ENCODE measurements at regions of chr5 and their contacts with region 1.

Region 1: GRCh38 chr5:52787600-52788504 is at the starts of genes ITGA1 and PELO:
- DNase-seq: peak; percentile 62
- ATAC-seq: peak; percentile 68
- H3K4me3 ChIP-seq: peak within 1 kb of the TSS; percentile 77
- H3K27ac ChIP-seq: peak within 1 kb of the TSS; percentile 85
- H3K4me1 ChIP-seq: peaks cover 48% of the 10 kb centered on the region
- H3K27me3 ChIP-seq: no peaks in the 10 kb centered on the region
- CTCF ChIP-seq: peak; percentile 39; the same call in 1 of the 2 replicates
- total RNA-seq, gene ITGA1: 3.4 and 4.7 TPM in 2 replicates
- total RNA-seq, gene PELO: 33.6 and 45.3 TPM in 2 replicates

Region 2: DNA sequence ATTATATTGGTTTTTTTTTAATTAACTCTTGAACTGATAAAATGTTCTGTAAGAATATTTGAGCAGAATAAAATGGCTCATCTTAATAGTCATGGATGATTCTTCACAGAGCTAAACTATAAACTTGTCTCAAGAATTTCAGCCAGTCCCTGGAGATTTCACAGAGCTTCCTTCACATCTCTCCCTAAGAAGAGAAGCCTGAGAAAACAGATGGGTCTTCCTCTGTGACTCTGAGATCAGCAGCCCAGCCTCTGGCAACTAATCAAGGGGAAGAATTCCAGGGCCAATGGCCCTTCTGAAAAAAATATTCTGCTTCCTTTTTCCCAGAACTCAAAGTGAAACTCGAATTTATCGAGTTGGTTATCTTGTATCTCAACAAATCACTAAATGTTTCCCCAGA is 122.3 kb before region 1 on chr5:
- CTCF ChIA-PET with region 1: interaction called, 6 read pairs
- POLR2A ChIA-PET with region 1: no interaction called
- intact Hi-C with region 1: loop called (anchors 10 kb)
- DNase-seq: no peak
- ATAC-seq: no peak
- H3K4me3 ChIP-seq: no peak overlapping the region
- H3K27ac ChIP-seq: no peak overlapping the region
- H3K4me1 ChIP-seq: no peaks in the 10 kb centered on the region
- H3K27me3 ChIP-seq: peaks cover 25% of the 10 kb centered on the region
- CTCF ChIP-seq: no peak

Region 3: GRCh38 chr5:52709171-52709925 is 78.5 kb before region 1 on chr5:
- CTCF ChIA-PET with region 1: no interaction called
- POLR2A ChIA-PET with region 1: no interaction called
- intact Hi-C with region 1: loop called (anchors 5 kb)
- DNase-seq: peak; percentile 50
- ATAC-seq: peak; percentile 70
- H3K4me3 ChIP-seq: no peak overlapping the region
- H3K27ac ChIP-seq: peak overlapping the region; percentile 57
- H3K4me1 ChIP-seq: 0 out of 2 replicates have a peak, but pooled peaks cover 9% of the 10 kb centered on the region
- H3K27me3 ChIP-seq: no peaks in the 10 kb centered on the region
- CTCF ChIP-seq: no peak

Region 4: GRCh38 chr5:52757991-52758390 is 29.9 kb before region 1 on chr5:
- CTCF ChIA-PET with region 1: no interaction called
- POLR2A ChIA-PET with region 1: no interaction called
- intact Hi-C with region 1: no loop called
- DNase-seq: peak; percentile 78
- ATAC-seq: peak; percentile 93
- H3K4me3 ChIP-seq: no peak overlapping the region
- H3K27ac ChIP-seq: peak overlapping the region; percentile 99
- H3K4me1 ChIP-seq: peaks cover 20% of the 10 kb centered on the region
- H3K27me3 ChIP-seq: no peaks in the 10 kb centered on the region
- CTCF ChIP-seq: no peak

Region 5: DNA sequence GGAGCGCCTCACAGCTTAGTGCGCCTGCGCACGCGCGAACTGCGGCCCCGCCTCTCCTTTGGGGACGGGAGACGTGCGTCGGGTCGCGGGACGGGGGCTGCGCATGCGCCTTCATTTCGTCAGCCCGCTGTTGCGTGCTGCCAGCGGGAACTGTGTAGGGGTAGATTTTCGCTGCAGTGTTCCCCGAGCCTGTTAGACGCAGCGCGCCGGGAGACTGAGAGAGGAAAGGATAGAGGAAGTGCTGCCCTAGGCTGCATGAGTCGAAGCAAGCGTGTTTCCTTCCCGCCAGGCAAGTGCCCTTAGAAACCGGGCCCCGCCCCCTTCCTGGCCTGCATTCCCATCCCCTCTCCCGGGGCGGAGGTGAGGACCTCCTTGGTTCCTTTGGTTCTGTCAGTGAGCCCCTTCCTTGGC is 12.1 kb after region 1 on chr5:
- CTCF ChIA-PET with region 1: no interaction called
- POLR2A ChIA-PET with region 1: interaction called, 3 read pairs
- intact Hi-C with region 1: loop called (anchors 1 kb)
- DNase-seq: peak; percentile 94
- ATAC-seq: peak; percentile 70
- H3K4me3 ChIP-seq: peak overlapping the region; percentile 77
- H3K27ac ChIP-seq: peak overlapping the region; percentile 99
- H3K4me1 ChIP-seq: peaks cover 25% of the 10 kb centered on the region
- H3K27me3 ChIP-seq: no peaks in the 10 kb centered on the region
- CTCF ChIP-seq: no peak

Region 6: DNA sequence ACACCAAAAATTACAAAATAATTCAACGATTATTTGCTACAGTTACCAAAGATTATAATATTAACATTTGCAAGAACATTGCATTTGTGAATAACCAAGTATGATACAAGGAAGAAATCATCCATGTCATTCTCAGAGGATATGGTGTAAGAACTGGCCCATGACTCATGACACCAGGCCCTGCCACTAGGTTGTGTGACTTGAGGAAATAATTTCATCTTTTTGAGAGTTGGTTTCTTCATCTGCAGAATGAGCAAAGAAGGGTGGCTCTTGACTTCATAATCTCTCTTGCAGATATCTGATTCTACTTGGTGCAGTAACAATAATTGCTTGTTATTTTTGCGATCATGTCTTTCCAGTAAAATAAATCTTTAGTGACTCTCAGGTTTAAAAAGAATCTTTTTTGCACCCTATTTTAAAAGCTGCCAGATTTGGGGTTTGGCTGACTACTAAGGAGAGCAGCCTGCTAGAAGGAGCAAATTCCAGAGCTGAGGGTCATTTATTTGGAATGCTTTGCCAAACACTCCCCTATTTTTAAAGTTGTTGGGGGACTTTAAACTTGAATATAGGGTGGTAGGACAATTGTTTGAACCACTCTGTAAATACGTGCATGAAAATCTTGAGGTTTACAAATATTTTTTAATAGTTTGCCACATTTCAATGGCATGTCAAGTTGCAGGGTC is 23.4 kb after region 1 on chr5:
- CTCF ChIA-PET with region 1: no interaction called
- POLR2A ChIA-PET with region 1: no interaction called
- intact Hi-C with region 1: no loop called
- DNase-seq: peak; percentile 49
- ATAC-seq: peak; percentile 28; the same call in 1 of the 2 replicates
- H3K4me3 ChIP-seq: no peak overlapping the region
- H3K27ac ChIP-seq: no peak overlapping the region
- H3K4me1 ChIP-seq: peaks cover 28% of the 10 kb centered on the region
- H3K27me3 ChIP-seq: no peaks in the 10 kb centered on the region
- CTCF ChIP-seq: no peak

Region 7: DNA sequence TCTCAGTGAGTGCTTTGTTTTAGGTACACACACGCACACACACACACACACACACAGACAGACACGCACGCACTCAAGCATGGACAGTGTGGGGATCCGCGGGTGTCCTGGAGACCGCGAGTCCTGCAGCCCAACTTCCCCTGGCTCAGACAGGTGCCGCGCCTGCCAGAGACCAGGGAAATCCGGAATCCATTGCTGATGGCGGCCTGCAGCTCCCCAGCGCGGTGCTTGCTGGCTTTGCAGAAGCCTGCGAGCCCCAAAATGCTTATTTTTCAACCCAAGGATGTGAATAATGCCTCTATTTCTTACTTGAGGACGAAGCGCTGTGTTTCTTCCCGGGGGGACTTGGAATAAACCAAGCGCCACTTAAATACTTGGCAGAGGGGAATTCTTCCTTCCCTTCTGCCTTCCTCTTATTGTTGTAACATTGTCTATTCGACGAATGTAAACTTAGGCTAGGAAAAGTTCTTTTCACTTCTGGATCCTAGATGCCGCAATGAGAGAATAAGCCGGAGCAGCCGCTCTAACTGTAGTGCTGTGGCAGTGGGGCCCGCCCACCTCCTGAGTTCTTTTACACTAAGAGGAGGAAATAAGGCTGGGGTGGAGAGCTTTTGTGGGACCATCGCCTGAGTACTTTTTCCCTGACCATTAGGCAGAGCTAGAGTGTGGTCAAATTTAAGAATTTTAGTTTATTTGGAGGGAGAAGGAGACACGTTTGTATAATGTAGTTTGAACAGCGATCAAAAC is 202.1 kb after region 1 on chr5:
- CTCF ChIA-PET with region 1: no interaction called
- POLR2A ChIA-PET with region 1: no interaction called
- intact Hi-C with region 1: loop called (anchors 10 kb)
- DNase-seq: peak; percentile 39
- ATAC-seq: peak; percentile 5
- H3K4me3 ChIP-seq: peak overlapping the region; percentile 89
- H3K27ac ChIP-seq: peak overlapping the region; percentile 92
- H3K4me1 ChIP-seq: peaks cover 66% of the 10 kb centered on the region
- H3K27me3 ChIP-seq: no peaks in the 10 kb centered on the region
- CTCF ChIP-seq: no peak; the same call in 1 of the 2 replicates

Measured in PC-3 (cell line).